AG04449 (cell line): ENCODE measurements at regions of chr17 and their contacts with region 1.

Region 1: GRCh38 chr17:3913531-3914311 is 2.5 kb downstream of the P2RX1 start:
- DNase-seq: no peak
- H3K4me3 ChIP-seq: no peak overlapping the region
- CTCF ChIP-seq: peak; percentile 99

Region 2: GRCh38 chr17:3298260-3298659 is 615.5 kb before region 1 on chr17 and contains the start of gene OR3A1:
- CTCF ChIA-PET with region 1: no interaction called
- POLR2A ChIA-PET with region 1: no interaction called
- DNase-seq: no peak
- H3K4me3 ChIP-seq: no peak within 1 kb of the TSS
- CTCF ChIP-seq: no peak

Region 3: DNA sequence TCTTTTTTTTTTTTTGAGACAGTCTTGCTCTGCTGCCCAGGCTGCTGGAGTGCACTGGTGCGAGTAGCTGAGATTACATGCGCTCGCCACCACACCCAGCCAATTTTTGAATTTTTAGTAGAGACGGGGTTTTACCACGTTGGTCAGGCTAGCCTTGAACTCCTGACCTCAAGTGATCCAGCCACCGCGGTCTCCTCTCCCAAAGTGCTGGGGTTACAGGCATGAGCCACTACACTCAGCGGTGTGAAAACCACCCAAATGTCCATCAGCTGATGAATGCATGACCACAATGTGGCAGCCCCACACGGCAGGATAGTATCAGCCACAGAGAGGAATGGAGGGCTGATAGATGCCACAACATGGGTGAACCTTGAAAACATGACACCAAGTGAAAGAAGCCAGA is 219.9 kb before region 1 on chr17:
- CTCF ChIA-PET with region 1: no interaction called
- POLR2A ChIA-PET with region 1: no interaction called
- DNase-seq: no peak
- H3K4me3 ChIP-seq: no peak overlapping the region
- CTCF ChIP-seq: no peak

Region 4: DNA sequence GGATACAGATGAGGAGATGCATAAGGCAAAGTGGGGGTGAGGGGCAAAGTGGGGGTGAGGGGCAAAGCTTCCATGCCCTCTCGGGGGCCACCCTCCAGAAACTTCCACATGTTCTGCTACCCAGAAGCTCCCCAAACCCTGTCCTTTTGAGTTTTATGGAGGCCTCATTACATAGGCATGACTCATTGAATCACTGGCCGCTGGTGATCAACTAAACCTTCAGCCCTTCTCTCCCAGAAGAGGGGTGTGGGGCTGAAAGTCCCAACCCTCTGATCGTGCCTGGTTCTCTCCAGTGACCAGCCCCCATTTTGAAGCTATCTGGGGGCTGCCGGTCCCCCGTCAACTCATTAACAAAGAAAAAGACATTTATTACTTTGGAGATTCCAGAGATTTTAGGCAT is 140.2 kb before region 1 on chr17:
- CTCF ChIA-PET with region 1: no interaction called
- POLR2A ChIA-PET with region 1: no interaction called
- DNase-seq: no peak
- H3K4me3 ChIP-seq: no peak overlapping the region
- CTCF ChIP-seq: no peak

Region 5: GRCh38 chr17:3893003-3893719 is 20.6 kb before region 1 on chr17 and contains the start of gene CAMKK1:
- CTCF ChIA-PET with region 1: interaction called, 75 read pairs
- POLR2A ChIA-PET with region 1: no interaction called
- DNase-seq: no peak
- H3K4me3 ChIP-seq: peak within 1 kb of the TSS; percentile 70
- CTCF ChIP-seq: no peak

Region 6: GRCh38 chr17:3935140-3935542 is 21.4 kb after region 1 on chr17:
- CTCF ChIA-PET with region 1: interaction called, 16 read pairs
- POLR2A ChIA-PET with region 1: no interaction called
- DNase-seq: no peak
- H3K4me3 ChIP-seq: no peak overlapping the region
- CTCF ChIP-seq: peak; percentile 71

Region 7: DNA sequence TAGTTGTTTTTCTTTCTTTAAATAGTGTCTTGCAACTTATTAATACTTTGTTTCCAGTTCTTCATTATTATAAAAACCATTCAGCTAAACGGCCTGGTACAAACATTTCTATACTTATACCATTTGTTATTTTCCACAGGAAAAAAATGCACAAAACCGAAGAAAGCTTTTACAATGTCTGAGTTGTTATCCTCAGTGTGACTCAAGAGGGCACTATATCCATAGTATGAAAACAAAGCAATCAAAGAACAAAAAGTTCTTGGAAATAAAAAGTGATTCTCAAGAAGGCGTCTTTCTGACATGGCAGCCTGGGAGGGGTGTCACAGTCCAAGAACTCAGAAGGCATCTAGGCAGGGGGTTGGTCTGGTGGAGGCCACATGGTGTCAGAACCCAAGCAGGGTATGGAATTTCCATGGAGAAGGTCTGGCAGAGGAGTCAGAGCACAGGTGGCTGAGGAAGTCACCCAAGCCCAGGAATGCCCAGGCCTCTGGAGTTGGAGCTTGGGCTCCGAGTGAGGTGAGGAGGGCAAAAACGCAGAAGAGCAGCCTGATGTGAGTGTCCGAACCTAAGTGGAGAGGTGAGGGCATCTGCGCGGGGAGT is 121.5 kb after region 1 on chr17:
- CTCF ChIA-PET with region 1: interaction called, 15 read pairs
- POLR2A ChIA-PET with region 1: no interaction called
- DNase-seq: no peak
- H3K4me3 ChIP-seq: no peak overlapping the region
- CTCF ChIP-seq: no peak